HEK293 (cell line): ENCODE measurements at regions of chr17 and their contacts with region 1.

Region 1: DNA sequence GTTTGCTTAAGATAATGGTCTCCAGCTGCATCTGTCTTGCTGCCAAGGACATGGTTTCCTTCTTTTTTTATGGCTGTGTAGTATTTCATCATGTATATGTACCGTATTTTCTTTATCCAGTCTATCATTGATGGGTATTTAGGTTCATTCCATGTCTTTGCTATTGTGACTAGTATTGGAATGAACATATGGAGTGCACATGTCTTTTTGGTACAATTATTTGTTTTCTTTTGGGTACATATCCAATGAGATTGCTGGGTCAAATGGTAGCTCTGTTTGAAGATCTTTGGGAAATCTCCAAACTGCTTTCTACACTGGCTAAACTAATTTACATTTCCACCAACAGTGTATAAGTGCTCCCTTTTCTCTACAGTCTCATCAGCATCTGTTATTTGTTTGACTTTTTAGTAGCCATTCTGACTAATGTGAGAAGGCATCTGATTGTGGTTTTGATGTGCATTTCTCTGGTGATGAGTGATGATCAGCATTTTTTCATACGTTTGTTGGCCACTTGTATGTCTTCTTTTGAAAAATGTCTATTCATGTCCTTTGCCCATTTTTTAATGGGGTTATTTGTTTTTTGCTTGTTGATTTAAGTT is 66.2 kb downstream of the TNFRSF13B start:
- H3K4me3 ChIP-seq: no peak overlapping the region
- H3K27ac ChIP-seq: no peak overlapping the region
- H3K4me1 ChIP-seq: no peaks in the 10 kb centered on the region
- CTCF ChIP-seq: no peak

Region 2: DNA sequence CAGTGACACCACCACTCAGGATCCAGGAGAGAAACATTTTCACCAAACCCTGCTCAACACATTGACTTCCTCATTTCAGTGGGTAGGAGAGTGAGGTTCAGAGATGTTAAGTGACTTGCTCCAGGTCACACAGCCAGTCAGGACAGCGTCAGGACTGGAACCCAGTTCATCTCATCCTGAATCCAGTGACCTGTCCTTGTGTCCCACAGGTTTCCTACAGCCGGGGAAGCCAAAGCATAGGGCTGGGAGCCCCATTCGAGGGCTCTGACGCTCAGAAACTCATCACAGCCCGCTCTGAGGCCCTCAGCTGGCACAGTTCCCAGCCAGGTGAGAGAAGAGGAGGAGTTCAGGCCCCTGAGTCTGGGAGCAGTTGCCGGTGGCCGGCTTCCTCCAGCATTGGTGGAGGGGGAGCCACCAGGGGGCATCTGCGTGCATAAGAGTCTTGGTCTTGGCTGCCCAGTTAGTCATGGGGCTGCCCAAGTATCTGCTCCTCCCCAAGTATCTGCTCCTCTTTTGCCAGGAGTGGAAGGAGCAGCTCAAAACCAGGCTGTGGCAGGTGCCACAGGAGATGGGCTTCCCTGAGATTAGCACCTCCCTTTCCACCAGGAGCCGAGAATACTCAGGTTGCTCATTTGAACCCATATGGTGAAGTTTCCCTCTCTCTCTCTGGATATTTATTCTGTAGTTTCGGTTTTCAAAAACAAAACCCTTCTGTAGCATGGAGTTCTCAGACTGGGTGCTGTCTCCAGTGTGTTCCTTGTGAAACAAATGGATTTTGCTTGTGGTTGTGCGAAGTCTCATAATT is 10.3 kb after region 1 on chr17:
- CTCF ChIA-PET with region 1: interaction called, 11 read pairs
- POLR2A ChIA-PET with region 1: no interaction called
- H3K4me3 ChIP-seq: no peak overlapping the region
- H3K27ac ChIP-seq: no peak overlapping the region
- H3K4me1 ChIP-seq: no peaks in the 10 kb centered on the region; the same call in 1 of the 2 replicates
- CTCF ChIP-seq: peak; percentile 43; the same call in 1 of the 2 replicates

Region 3: DNA sequence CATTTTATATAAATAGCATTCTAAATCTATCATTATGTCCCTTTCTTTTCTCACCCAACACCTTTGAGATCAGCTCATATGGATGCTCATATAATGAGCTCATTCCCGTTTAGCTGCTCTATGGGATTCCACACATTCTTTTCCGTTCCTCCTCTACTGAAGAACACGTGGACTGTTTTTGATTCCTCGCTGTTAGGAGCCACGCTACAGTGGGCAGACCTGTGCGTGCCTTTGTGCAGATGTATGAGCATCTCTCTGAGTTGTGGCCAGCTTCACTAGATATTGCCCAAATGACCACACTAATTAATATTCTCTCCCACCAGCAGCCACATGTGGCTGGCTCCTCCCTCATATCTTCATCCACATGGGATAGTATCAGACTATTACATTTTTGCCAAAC is 72.2 kb after region 1 on chr17:
- CTCF ChIA-PET with region 1: no interaction called
- POLR2A ChIA-PET with region 1: no interaction called
- H3K4me3 ChIP-seq: no peak overlapping the region
- H3K27ac ChIP-seq: no peak overlapping the region
- H3K4me1 ChIP-seq: no peaks in the 10 kb centered on the region
- CTCF ChIP-seq: no peak